ENCODE measurements at regions of chr4 and their contacts with region 1.

Region 1: GRCh38 chr4:183840311-183840710 is 64.8 kb upstream of the STOX2 start:
- ATAC-seq: peak; percentile 74 to 91 (median 82)
- H3K4me3 ChIP-seq: no peak overlapping the region
- H3K27ac ChIP-seq: no peak overlapping the region
- H3K4me1 ChIP-seq: no peaks in the 10 kb centered on the region

Region 2: DNA sequence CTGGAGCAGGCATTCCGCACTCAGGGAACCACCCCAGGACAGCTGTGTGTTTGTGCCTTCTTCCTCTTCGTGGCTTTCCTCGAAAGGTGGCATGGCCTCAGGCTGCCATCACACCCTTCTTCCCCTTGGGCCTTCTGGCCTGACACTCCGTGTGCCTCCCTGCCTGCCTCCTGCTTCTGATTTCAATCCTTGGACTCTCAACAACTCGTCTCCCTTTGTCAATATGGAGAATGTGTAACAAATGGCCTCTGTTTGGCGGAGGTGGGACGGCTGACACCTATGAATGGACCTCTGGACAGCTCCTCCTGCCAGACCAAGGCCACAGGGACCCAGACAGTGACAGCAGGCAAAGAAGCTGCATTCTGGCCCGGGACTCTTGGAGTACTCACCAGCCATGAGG is 240.4 kb after region 1 on chr4:
- in situ Hi-C with region 1: no loop called
- ATAC-seq: no peak
- H3K4me3 ChIP-seq: no peak overlapping the region
- H3K27ac ChIP-seq: no peak overlapping the region
- H3K4me1 ChIP-seq: no peaks in the 10 kb centered on the region

Region 3: DNA sequence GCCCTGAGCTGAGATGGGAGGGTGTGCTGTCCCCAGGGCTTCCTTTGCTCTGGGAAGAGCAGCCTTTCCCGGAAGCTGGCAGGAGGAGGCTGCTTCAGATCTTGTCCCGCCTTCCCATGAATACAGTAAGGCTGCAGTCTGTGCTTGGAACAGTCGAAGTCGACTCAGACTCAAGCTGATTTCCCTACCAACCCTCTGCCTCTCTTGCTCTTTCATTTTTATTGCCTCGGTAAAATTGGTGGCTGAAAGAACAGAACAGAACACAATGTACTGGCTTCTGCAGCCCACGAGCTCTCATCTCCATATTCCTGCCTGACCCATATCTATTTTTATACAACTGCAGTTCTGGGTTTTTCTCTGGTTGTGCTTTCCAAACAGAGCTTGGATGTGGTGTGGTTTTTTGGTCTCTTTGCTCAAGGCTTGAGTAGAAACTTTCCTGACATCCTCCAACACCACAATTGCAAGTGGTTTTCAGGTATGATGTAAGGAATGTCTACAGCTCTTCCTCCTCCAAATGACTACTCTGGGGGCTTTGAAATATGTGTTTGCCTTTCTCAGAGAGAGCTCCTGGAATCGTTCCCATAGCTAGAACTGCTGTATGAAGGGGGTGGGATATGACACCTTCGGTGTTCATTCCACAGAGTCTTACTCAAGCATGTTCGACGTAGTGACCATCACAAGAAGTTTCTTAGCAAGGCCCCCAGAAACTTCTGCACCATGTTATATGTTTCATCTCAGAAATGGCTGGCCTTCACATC is 316.0 kb after region 1 on chr4:
- in situ Hi-C with region 1: loop called in 6 of 9 experiments (anchors 10 to 25 kb)
- ATAC-seq: peak in 3 of 8 experiments; percentile 77 to 89 (median 87)
- H3K4me3 ChIP-seq: no peak overlapping the region
- H3K27ac ChIP-seq: no peak overlapping the region
- H3K4me1 ChIP-seq: no peaks in the 10 kb centered on the region

Region 4: GRCh38 chr4:184168406-184169019 is 328.2 kb after region 1 on chr4:
- in situ Hi-C with region 1: loop called in 6 of 9 experiments (anchors 10 to 25 kb)
- ATAC-seq: peak; percentile 96 to 99 (median 98)
- H3K4me3 ChIP-seq: no peak overlapping the region
- H3K27ac ChIP-seq: no peak overlapping the region
- H3K4me1 ChIP-seq: peaks cover 6% of the 10 kb centered on the region in 2 donors